AG04450 (cell line): ENCODE measurements at regions of chr9 and their contacts with region 1.

Region 1: GRCh38 chr9:97615439-97616072 is 17.6 kb downstream of the TSTD2 start:
- DNase-seq: peak; percentile 32
- H3K4me3 ChIP-seq: no peak overlapping the region
- H3K27ac ChIP-seq: no peak overlapping the region
- H3K27me3 ChIP-seq: no peaks in the 10 kb centered on the region
- CTCF ChIP-seq: peak; percentile 84

Region 2: GRCh38 chr9:97386733-97387503 is 228.6 kb before region 1 on chr9:
- CTCF ChIA-PET with region 1: interaction called, 14 read pairs
- POLR2A ChIA-PET with region 1: no interaction called
- DNase-seq: peak; percentile 24
- H3K4me3 ChIP-seq: no peak overlapping the region
- H3K27ac ChIP-seq: no peak overlapping the region
- H3K27me3 ChIP-seq: peaks cover 3% of the 10 kb centered on the region
- CTCF ChIP-seq: peak; percentile 99

Region 3: DNA sequence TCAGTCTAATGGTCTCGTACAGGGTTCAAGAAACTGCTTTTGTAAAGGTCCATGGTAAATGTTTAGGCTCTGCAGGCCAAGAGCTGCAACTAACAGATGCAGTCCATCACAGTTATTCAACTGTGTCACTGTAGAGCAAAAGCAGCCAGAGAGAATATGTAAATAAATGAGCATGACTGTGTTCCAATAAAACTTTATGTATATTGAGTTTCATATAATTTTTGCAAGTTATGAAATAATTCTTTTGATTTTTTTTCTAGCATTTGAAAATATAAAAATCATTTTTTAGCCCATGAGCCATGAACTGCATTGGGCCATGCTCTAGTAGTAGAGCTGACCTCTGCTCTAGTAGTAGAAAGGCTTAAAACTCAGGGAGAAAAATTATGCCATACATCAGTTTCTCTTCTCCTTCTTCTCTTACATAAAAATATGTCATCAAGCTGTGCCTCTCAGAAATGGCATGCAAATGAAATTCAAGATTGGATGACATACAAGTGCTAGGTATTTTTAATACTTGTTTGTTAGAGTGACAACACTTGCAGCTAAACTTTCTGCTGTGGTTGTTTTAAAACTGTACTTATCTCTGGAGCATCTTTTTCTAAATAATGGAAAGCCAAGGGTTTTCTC is 156.3 kb before region 1 on chr9:
- CTCF ChIA-PET with region 1: interaction called, 330 read pairs
- POLR2A ChIA-PET with region 1: no interaction called
- DNase-seq: no peak
- H3K4me3 ChIP-seq: no peak overlapping the region
- H3K27ac ChIP-seq: no peak overlapping the region
- H3K27me3 ChIP-seq: no peaks in the 10 kb centered on the region
- CTCF ChIP-seq: no peak

Region 4: DNA sequence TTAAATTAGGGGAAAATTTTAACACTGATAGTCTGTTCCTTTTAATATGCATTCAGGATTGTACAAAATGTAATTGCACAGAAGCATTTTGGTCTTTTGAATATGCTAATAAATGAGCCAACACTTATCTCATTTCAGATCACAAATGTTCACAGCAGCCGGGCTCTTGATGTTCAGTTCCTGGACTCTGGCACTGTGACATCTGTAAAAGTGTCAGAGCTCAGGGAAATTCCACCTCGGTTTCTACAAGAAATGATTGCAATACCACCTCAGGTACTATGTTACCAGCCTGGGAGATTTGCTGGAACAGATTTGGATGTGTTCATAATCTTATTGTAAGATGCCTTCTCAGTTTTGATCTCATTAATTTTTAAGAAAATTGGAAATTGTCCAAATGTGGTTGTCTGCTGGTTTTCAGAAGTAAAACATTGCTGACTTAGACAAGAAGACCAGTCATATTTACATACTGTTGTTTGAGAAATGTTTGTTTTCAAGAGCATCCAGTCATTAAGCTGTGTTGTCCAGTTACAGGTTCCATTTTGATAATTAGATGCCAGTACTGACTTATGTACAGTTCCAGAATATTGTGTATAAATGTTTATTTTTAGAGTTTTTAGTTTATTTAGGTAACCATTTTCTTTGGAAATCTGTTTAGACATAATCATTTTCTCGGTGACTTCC is 137.1 kb before region 1 on chr9:
- CTCF ChIA-PET with region 1: interaction called, 330 read pairs
- POLR2A ChIA-PET with region 1: no interaction called
- DNase-seq: no peak
- H3K4me3 ChIP-seq: no peak overlapping the region
- H3K27ac ChIP-seq: no peak overlapping the region
- H3K27me3 ChIP-seq: no peaks in the 10 kb centered on the region
- CTCF ChIP-seq: no peak

Region 5: DNA sequence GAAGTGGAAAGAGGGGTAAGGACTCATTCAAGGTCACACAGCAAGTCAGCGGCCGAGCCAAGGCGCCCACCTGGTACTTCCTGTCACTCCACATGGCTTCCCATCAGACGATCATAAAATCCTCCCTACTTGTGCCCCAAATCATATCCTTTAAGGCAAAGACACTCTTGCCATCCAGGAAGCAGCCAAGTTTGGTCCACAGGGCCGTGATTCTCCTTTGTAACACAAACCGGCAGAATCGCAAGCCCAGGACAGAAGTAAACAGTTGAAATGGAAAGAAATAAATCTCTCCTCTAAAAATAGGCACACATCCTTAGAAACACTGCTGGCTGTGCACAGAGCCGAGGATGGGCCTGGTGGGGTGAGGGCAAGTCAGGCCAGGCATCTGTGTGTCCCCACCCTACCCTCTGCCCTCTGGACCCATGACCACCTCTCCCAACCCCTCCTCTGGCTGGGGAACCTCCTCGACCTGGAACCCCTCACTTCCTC is 83.6 kb before region 1 on chr9:
- CTCF ChIA-PET with region 1: no interaction called
- POLR2A ChIA-PET with region 1: no interaction called
- DNase-seq: no peak
- H3K4me3 ChIP-seq: no peak overlapping the region
- H3K27ac ChIP-seq: no peak overlapping the region
- H3K27me3 ChIP-seq: peaks cover 13% of the 10 kb centered on the region
- CTCF ChIP-seq: no peak

Region 6: DNA sequence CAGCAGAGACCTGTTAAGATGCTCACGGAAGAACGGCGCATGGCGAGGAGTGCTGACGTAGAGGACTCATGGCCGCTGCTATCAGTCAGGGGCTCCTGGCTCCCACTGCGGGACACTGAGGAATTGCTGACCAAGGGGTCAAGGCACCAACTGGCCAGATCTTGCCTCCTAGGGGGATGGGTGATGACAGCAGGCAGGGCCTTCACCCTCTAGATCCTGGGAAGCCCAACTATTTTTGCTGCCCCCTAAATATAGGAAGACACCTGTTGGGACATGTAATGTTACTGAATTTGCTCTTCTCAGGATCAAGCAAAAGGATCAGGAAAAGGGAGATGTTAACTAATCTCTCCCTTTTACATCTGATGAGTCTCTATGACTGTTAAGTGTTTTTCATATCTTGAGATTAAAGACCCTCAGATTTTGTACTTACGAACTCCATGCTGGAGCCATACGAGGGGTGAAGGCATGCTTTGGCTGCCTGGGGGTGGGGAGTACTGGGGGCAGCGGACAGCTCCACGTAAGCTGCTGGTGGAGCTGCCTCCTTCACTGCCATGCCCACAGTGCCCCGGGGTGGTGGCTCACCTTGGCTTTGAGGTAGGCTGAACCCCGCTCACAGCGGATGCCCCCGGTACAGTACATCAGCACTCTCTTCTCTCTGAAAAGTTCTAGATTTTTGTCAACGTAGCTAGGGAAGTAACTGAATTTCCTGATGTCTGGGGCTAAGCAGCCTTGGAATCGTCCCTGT is 10.5 kb before region 1 on chr9:
- CTCF ChIA-PET with region 1: interaction called, 177 read pairs
- POLR2A ChIA-PET with region 1: no interaction called
- DNase-seq: no peak
- H3K4me3 ChIP-seq: no peak overlapping the region
- H3K27ac ChIP-seq: no peak overlapping the region
- H3K27me3 ChIP-seq: no peaks in the 10 kb centered on the region
- CTCF ChIP-seq: no peak

Region 7: GRCh38 chr9:97645720-97646119 is 30.2 kb after region 1 on chr9:
- CTCF ChIA-PET with region 1: no interaction called
- POLR2A ChIA-PET with region 1: no interaction called
- DNase-seq: no peak
- H3K4me3 ChIP-seq: no peak overlapping the region
- H3K27ac ChIP-seq: no peak overlapping the region
- H3K27me3 ChIP-seq: no peaks in the 10 kb centered on the region
- CTCF ChIP-seq: no peak

Region 8: DNA sequence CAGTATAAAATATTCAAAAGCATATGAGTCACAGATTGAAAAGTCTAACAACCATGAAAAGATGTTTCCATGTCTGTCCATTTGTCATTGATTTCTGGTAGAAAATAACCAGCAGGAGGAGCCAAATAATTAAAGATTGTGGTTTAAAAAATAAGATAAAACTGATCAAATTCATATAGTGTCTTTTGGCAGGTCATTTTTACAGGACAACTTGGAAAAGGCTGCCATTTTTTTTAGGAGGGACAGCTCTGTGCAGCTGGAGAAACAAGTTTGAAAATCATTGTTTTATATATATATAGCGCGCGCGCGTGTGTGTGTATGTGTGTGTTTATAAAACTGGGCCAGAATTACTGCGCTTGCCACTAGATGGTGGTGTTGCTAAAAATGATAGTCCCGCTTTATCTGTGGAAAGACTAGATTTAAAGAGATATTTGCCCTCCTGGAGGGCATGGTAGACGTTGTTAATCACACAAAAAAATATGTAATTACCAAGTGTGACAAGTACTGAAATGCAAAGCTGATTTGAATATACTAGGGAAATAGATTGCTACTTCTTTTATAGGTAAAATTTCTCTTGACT is 308.1 kb after region 1 on chr9:
- CTCF ChIA-PET with region 1: no interaction called
- POLR2A ChIA-PET with region 1: no interaction called
- DNase-seq: peak; percentile 53
- H3K4me3 ChIP-seq: peak overlapping the region; percentile 51
- H3K27ac ChIP-seq: no peak overlapping the region
- H3K27me3 ChIP-seq: peaks cover 12% of the 10 kb centered on the region
- CTCF ChIP-seq: peak; percentile 73